Activated B cell treated with CpG ODN at 0.5 μM for 24 hours (primary cell): ENCODE measurements at regions of chr4 and their contacts with region 1.

Region 1: DNA sequence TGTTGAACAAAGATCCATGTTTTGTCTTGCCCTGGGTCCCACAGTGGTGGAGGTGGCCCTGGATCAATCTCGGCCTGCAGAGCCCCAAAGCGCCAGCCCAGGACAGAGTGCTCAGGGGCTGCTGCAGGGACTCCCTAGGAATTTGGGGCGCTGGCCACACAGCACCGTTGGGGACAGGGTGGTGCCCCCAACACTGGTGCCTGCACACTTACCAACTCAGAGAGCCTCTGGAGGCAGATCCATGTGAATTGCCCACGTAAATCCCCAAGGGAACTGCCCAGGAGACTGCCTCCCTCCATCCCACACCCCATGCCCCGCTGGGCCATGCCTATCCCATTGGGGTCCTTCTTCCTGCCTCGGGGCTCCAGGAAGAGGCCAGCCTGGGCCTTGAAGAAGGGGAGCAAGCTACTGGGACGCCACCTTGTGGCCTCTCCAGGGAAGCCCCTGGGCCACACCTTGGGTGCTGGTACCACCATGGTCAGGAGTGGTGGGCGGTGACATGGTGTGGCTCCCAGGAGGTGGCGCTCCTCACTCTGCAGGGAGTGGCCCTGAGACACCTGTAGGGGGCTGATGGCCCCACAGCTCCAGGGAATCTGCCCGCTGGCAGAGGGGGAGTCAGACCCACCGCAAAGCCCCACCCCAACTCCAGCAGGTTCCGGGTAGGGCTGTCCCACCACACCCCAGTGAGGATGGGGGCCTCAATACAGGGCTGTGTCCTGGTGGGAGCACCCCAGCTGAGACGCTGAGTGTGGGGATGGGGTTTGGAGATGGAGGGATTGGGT is 22.8 kb downstream of the CFAP99 start:
- DNase-seq: peak; percentile 61
- ATAC-seq: peak; percentile 100
- H3K4me3 Mint-ChIP-seq: no peak overlapping the region
- H3K27ac Mint-ChIP-seq: no peak overlapping the region
- H3K4me1 Mint-ChIP-seq: peaks cover 4% of the 10 kb centered on the region
- H3K27me3 Mint-ChIP-seq: no peaks in the 10 kb centered on the region
- CTCF ChIP-seq: no peak

Region 2: DNA sequence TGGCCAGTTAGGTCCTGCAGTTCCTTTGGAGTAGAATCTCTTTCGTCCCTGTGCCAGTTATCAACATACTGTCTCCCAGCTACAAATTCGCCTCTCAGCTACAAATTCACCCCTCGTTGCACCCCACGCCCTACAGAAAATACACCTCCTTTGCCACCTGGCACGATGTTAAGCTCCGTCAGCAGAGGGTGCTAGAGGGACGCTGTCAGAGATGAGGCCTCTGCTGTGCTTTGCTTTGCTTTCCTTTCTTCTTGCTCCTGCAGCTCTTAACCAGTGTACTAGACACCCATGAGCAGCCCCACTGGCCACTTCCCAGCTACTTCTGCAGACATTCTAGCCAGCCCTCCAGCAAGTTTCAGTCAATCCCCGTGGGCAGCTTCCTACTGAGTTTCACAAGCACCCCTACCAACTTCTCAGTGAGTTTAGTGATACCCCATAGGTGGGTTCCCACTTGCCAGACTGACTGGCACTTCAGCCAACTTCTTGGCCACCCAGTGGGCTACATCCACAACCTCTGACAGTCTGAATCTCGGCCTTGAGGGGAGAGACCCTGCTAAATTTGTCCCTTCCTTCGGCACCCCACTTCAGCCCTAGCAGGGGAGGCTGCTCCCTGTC is 221.5 kb before region 1 on chr4:
- CTCF ChIA-PET with region 1: interaction called, 39 read pairs
- POLR2A ChIA-PET with region 1: no interaction called
- intact Hi-C with region 1: loop called (anchors 1 kb)
- DNase-seq: peak; percentile 62
- ATAC-seq: peak; percentile 97
- H3K4me3 Mint-ChIP-seq: no peak overlapping the region
- H3K27ac Mint-ChIP-seq: no peak overlapping the region
- H3K4me1 Mint-ChIP-seq: peaks cover 4% of the 10 kb centered on the region
- H3K27me3 Mint-ChIP-seq: no peaks in the 10 kb centered on the region
- CTCF ChIP-seq: peak; percentile 94

Region 3: GRCh38 chr4:2418650-2419571 is 22.7 kb before region 1 on chr4 and contains the start of gene CFAP99:
- CTCF ChIA-PET with region 1: interaction called, 6 read pairs
- POLR2A ChIA-PET with region 1: no interaction called
- intact Hi-C with region 1: loop called (anchors 2 kb)
- DNase-seq: peak; percentile 93
- ATAC-seq: peak; percentile 91
- H3K4me3 Mint-ChIP-seq: peak within 1 kb of the TSS; percentile 91
- H3K27ac Mint-ChIP-seq: peak within 1 kb of the TSS; percentile 90
- H3K4me1 Mint-ChIP-seq: peaks cover 39% of the 10 kb centered on the region
- H3K27me3 Mint-ChIP-seq: peaks cover 28% of the 10 kb centered on the region
- CTCF ChIP-seq: no peak
- total RNA-seq, gene CFAP99: not detected in 2 replicates

Region 4: GRCh38 chr4:2462218-2462991 is 20.8 kb after region 1 on chr4:
- CTCF ChIA-PET with region 1: interaction called, 5 read pairs
- POLR2A ChIA-PET with region 1: no interaction called
- intact Hi-C with region 1: loop called (anchors 1 kb)
- DNase-seq: peak; percentile 72
- ATAC-seq: peak; percentile 97
- H3K4me3 Mint-ChIP-seq: peak overlapping the region; percentile 77
- H3K27ac Mint-ChIP-seq: no peak overlapping the region
- H3K4me1 Mint-ChIP-seq: peaks cover 11% of the 10 kb centered on the region
- H3K27me3 Mint-ChIP-seq: peaks cover 4% of the 10 kb centered on the region
- CTCF ChIP-seq: no peak

Region 5: GRCh38 chr4:2484993-2485392 is 43.4 kb after region 1 on chr4:
- CTCF ChIA-PET with region 1: interaction called, 3 read pairs
- POLR2A ChIA-PET with region 1: no interaction called
- intact Hi-C with region 1: loop called (anchors 2 kb)
- DNase-seq: peak; percentile 64
- ATAC-seq: peak; percentile 86
- H3K4me3 Mint-ChIP-seq: peak overlapping the region; percentile 75
- H3K27ac Mint-ChIP-seq: peak overlapping the region; percentile 92
- H3K4me1 Mint-ChIP-seq: peaks cover 93% of the 10 kb centered on the region
- H3K27me3 Mint-ChIP-seq: no peaks in the 10 kb centered on the region
- CTCF ChIP-seq: no peak